CD14-positive monocyte (primary cell): ENCODE measurements at regions of chr10 and their contacts with region 1.

Region 1: DNA sequence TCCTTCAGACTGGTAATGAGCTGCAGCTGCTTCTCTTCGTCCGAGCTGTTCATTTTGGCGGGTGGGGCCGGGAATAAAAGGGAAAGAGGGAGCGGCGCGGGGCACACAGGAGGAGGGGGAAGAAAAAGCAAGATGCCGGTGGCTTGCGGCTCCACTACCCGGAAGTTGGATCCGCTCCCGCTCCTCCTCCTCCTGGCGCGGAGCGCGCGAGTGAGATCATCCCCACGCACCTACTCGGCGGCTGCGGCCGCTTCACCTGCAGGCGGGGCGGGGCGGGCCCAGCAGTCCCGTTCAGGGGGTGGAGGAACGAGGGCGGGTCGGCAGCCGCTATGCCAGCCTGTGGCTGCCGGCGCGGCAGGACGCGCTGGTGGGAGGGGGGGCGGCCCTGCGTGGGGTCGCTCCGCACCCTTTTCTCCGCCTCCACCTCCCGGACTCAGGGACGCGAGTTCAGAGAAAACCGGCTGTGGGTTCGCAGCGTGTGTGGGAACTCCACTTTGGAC is at the start of gene SHTN1:
- DNase-seq: peak; percentile 31 to 69 (median 60)
- H3K4me3 ChIP-seq: peak within 1 kb of the TSS; percentile 75 to 98 (median 91)
- H3K4me3 Mint-ChIP-seq: peak within 1 kb of the TSS; percentile 94 to 96
- H3K27ac ChIP-seq: peak within 1 kb of the TSS; percentile 88 to 90
- H3K27ac Mint-ChIP-seq: peak within 1 kb of the TSS; percentile 83 to 92 (median 89)
- H3K4me1 ChIP-seq: peaks cover 33 to 59% of the 10 kb centered on the region in 2 donors
- H3K4me1 Mint-ChIP-seq: peaks cover 44% of the 10 kb centered on the region
- H3K27me3 ChIP-seq: no peaks in the 10 kb centered on the region
- H3K27me3 Mint-ChIP-seq: peaks cover 0 to 11% (median 11%) of the 10 kb centered on the region in 3 donors
- CTCF ChIP-seq: no peak
- polyA plus RNA-seq, gene SHTN1: 14.4 to 22.6 (median 14.9) TPM

Region 2: DNA sequence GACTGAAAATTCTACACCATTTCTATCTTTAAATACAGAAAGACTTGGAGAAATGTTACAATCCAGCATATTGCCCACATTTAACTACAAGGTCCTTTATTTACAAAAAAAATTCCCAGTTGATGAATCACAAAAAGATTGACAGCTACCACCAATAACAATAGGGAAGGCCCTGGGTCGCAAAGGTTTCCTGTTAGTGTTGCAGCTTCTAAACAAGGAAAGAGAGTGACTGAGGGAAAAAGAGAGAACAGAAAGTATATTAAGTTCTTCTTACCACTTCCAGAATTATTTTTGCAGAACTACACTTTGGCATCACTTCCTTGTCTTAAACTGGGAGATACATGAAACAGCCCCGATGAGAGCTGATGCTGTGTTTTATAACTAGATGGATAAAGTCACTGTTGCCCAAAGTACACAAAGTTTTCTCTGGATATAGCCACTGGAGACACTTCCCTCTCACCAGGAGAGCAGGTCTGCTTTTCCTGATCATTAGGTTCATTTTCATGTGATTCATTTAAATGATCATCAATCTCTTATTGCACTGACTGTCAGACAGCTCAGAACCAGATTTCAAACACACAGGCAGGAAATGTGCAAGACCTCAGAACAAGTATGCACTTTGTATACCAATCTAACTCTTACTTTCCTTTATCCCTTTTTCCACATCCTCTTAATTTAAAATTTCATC is 57.1 kb before region 1 on chr10:
- intact Hi-C with region 1: loop called (anchors 2 to 10 kb)
- DNase-seq: peak; percentile 69 to 94 (median 93)
- H3K4me3 ChIP-seq: peak overlapping the region in 2 of 3 experiments; percentile 10 to 53
- H3K4me3 Mint-ChIP-seq: peak overlapping the region; percentile 24 to 72
- H3K27ac ChIP-seq: peak overlapping the region; percentile 70 to 86
- H3K27ac Mint-ChIP-seq: peak overlapping the region; percentile 87 to 96 (median 94)
- H3K4me1 ChIP-seq: peaks cover 56 to 65% of the 10 kb centered on the region in 2 donors
- H3K4me1 Mint-ChIP-seq: peaks cover 43% of the 10 kb centered on the region
- H3K27me3 ChIP-seq: no peaks in the 10 kb centered on the region
- H3K27me3 Mint-ChIP-seq: no peaks in the 10 kb centered on the region
- CTCF ChIP-seq: no peak

Region 3: GRCh38 chr10:117271427-117271826 is 266.4 kb after region 1 on chr10:
- intact Hi-C with region 1: no loop called
- DNase-seq: no peak
- H3K4me3 ChIP-seq: no peak overlapping the region
- H3K4me3 Mint-ChIP-seq: no peak overlapping the region
- H3K27ac ChIP-seq: no peak overlapping the region
- H3K27ac Mint-ChIP-seq: no peak overlapping the region
- H3K4me1 ChIP-seq: no peaks in the 10 kb centered on the region
- H3K4me1 Mint-ChIP-seq: peaks cover 2% of the 10 kb centered on the region
- H3K27me3 ChIP-seq: no peaks in the 10 kb centered on the region
- H3K27me3 Mint-ChIP-seq: peaks cover 1 to 4% (median 2%) of the 10 kb centered on the region in 3 donors
- CTCF ChIP-seq: no peak

Region 4: GRCh38 chr10:117284716-117285494 is 279.8 kb after region 1 on chr10:
- intact Hi-C with region 1: no loop called
- DNase-seq: no peak
- H3K4me3 ChIP-seq: no peak overlapping the region
- H3K4me3 Mint-ChIP-seq: no peak overlapping the region
- H3K27ac ChIP-seq: no peak overlapping the region
- H3K27ac Mint-ChIP-seq: peak overlapping the region in 3 of 7 donors; percentile 13 to 35 (median 26)
- H3K4me1 ChIP-seq: no peaks in the 10 kb centered on the region
- H3K4me1 Mint-ChIP-seq: no peaks in the 10 kb centered on the region
- H3K27me3 ChIP-seq: no peaks in the 10 kb centered on the region
- H3K27me3 Mint-ChIP-seq: no peaks in the 10 kb centered on the region
- CTCF ChIP-seq: no peak